ENCODE measurements at regions of chr16 and their contacts with region 1.

Region 1: DNA sequence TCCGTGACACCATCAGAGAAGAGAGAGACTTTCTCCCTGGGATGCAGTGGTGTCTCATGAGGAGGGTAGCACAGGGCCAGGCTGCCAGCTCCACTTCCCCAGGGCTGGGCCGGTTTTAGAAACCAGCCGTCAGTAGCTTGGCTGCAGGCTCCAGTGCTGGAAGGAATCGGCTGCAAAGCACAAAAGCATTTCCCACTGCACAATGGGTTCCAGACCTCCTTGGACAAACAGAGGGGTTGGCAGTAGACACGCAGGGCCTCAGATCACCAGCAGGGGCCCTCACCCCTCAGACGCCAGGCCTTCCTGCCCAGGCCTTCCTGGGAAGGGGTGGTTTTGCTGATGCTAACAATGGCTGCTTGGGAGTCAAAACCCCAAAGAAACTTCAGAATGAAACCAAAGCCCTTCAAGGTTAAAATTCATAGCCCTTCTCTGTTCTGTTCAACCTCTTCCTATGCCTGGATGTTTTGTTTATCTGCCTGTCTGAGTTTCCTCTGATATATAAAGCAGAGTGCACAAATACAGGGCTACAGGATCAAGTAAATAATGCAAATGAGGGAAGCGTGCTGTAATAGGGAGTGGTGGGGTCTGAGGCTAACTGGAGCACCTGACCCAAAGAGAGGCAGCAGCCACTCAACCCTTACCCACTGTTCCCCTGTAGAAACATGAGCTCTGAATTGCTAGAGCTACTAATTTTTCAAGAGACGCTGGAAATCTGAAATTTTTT is 26.2 kb downstream of the TEKT5 start:
- DNase-seq: peak; percentile 69
- H3K4me3 ChIP-seq: no peak overlapping the region
- H3K27ac ChIP-seq: no peak overlapping the region
- H3K4me1 ChIP-seq: no peaks in the 10 kb centered on the region
- H3K27me3 ChIP-seq: no peaks in the 10 kb centered on the region; the same call in 1 of the 2 replicates
- CTCF ChIP-seq: peak; percentile 57
- EP300 ChIP-seq: no peak
- RAD21 ChIP-seq: peak; percentile 45

Region 2: DNA sequence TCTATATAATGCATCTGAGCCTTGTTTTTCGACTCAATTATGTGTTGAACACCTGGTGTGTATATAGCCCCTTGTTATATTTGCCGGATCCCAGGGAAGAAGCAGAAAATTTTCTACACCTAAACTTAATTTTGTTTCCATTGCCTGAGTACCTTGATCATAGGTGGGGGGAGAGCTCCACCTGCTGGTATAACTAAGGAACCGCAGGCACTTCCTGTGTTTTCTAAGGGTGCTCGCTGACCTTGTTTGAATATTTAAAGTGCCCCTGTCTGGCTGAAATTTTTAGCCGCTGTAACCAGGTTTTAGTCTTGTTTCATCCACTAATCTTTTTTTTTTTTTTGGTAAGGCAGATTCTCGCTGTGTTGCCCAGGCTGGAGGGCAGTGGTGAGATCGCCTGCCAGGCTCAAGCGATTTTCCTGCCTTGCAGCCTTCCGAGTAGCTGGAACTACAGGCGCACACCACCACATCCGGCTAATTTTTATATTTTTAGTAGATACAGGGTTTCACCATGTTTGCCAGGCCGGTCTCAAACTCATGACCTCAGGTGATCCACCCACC is 68.7 kb after region 1 on chr16:
- CTCF ChIA-PET with region 1: interaction called, 10 read pairs
- POLR2A ChIA-PET with region 1: no interaction called
- DNase-seq: peak; percentile 70
- H3K4me3 ChIP-seq: no peak overlapping the region; a peak in 1 of 4 replicates
- H3K27ac ChIP-seq: no peak overlapping the region
- H3K4me1 ChIP-seq: peaks cover 0 to 15% of the 10 kb centered on the region in 2 experiments; a peak in 1 of 4 replicates
- H3K27me3 ChIP-seq: no peaks in the 10 kb centered on the region
- CTCF ChIP-seq: peak; percentile 96
- EP300 ChIP-seq: no peak
- RAD21 ChIP-seq: peak; percentile 97

Measured in SK-N-SH (cell line).